B cell (primary cell): ENCODE measurements at regions of chr11 and their contacts with region 1.

Region 1: DNA sequence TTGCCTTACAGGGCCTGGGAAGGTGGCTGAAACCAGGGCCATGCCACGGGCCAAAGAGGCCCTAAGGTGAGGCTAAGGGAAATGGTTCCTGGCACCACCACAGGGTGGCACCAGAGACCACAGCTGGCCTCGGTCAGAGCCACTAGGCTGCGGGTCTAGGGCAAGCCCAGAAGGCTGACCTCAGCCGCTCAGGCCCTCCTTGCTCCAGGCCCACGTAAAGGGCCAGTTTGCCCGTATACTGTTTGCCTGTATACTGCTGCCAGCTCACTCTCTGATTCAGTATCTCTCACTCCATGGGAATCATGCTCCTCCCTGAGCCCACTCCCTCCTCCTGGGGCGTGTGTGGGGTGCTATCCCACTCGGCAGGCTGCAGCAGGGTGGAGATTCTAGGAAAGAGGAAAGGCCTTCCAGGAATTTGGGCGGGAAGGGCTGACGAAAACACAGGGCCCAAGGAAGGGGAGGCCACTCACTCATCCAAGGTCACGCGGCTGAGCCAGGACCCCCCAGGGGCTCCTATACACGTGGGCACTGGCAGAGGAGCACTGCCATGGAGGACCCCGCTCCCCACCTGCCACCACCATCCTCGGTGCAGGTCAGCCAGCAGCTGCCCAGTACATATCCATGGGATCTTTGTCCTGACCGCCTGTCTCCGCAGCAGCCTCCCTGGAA is 62.4 kb downstream of the NECTIN1 start:
- DNase-seq: peak; percentile 64
- ATAC-seq: peak; percentile 81
- H3K4me3 ChIP-seq: no peak overlapping the region
- H3K4me3 Mint-ChIP-seq: no peak overlapping the region
- H3K27ac ChIP-seq: no peak overlapping the region
- H3K27ac Mint-ChIP-seq: no peak overlapping the region
- H3K4me1 ChIP-seq: no peaks in the 10 kb centered on the region
- H3K4me1 Mint-ChIP-seq: no peaks in the 10 kb centered on the region
- H3K27me3 ChIP-seq: no peaks in the 10 kb centered on the region
- H3K27me3 Mint-ChIP-seq: no peaks in the 10 kb centered on the region
- CTCF ChIP-seq: peak; percentile 76

Region 2: DNA sequence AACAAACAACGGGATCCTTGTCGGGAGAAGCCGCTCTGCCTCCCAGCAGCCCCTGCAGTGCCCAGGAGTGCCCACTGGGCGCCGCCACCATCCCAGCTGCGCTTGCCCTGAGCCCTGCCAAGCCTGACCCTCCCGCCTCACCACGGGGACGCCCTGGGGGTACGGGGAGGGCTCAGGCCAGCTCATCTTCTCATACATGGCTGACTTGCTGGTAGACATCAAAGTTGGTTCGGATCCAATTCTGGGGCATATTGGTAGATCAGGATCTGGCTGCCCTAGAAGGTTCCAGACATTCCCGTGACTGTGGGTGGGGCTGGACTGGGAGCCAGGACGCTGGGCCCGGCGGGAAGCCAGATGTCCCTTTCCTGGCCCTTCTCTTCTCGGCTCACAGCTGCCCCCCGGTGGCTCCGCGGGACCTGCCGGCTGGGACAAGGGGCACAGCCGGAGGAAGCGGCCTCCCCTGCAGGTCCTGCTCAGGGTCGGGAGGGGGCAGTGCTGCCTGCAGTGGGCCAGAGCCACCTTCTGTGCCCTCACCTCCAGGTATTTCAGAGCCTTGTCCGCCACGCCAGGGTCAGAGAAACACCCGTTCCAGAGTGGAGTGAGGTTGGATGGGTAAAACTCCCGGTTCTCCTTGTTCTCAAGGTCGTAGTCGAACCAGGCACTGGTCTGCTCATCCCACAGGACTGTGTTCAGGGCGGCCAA is 976.6 kb before region 1 on chr11:
- CTCF ChIA-PET with region 1: no interaction called
- POLR2A ChIA-PET with region 1: no interaction called
- intact Hi-C with region 1: no loop called
- DNase-seq: peak; percentile 88
- ATAC-seq: peak; percentile 94
- H3K4me3 ChIP-seq: peak overlapping the region in 4 of 5 experiments; percentile 36 to 67 (median 52)
- H3K4me3 Mint-ChIP-seq: peak overlapping the region; percentile 85
- H3K27ac ChIP-seq: peak overlapping the region in 1 of 2 donors; percentile 51
- H3K27ac Mint-ChIP-seq: peak overlapping the region; percentile 68
- H3K4me1 ChIP-seq: peaks cover 10 to 27% of the 10 kb centered on the region in 2 donors
- H3K4me1 Mint-ChIP-seq: peaks cover 20% of the 10 kb centered on the region
- H3K27me3 ChIP-seq: peaks cover 0 to 4% (median 0%) of the 10 kb centered on the region in 4 experiments
- H3K27me3 Mint-ChIP-seq: peaks cover 10% of the 10 kb centered on the region
- CTCF ChIP-seq: peak; percentile 96

Region 3: DNA sequence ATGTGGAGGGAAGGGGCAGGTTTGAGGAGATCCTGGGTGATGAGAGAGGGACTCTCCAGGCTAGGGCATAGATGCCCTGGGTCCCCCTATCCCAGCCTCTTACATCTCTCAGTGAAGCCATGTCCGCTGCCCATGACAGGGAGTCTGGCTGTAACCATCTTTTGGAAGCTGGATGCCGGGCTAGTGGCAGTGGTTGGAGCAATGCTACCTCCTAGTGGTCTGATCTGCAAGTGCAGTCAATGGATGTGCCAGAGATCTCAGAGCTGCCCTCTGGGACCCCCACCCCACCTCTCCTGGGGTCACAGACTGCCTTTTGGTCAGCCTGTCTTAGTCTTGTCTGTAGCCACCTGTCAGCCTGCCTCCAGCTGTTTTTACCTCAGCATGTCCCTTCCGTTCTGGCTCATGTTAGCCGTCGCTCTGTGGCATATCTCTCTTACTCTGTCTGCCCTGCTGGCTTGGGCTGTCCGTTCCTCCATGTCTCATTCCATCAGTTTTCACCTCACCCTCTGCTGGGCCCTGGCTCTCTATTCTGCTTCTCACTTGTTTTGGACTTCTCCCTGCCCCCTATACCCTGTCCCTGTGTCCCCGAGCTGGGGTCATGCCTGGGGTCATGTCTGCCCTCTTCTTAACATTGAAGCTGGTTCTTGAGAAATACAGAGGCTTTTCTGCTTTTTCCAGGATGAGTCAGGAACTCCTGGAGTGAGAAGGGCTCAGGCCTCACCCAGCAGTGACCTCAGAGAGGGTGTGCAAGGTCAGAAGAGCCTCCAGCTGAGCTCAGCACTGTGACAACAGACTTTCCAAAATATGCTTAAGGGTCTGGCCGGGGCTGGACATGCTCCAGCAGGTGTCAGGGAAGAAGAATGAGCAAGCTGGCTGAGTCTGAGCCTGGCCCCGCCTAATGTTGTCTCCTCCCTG is 191.7 kb before region 1 on chr11:
- CTCF ChIA-PET with region 1: no interaction called
- POLR2A ChIA-PET with region 1: no interaction called
- intact Hi-C with region 1: no loop called
- DNase-seq: peak; percentile 59
- ATAC-seq: peak; percentile 67
- H3K4me3 ChIP-seq: no peak overlapping the region
- H3K4me3 Mint-ChIP-seq: no peak overlapping the region
- H3K27ac ChIP-seq: no peak overlapping the region
- H3K27ac Mint-ChIP-seq: no peak overlapping the region
- H3K4me1 ChIP-seq: no peaks in the 10 kb centered on the region
- H3K4me1 Mint-ChIP-seq: no peaks in the 10 kb centered on the region
- H3K27me3 ChIP-seq: peaks cover 0 to 11% (median 3%) of the 10 kb centered on the region in 4 experiments
- H3K27me3 Mint-ChIP-seq: peaks cover 45% of the 10 kb centered on the region
- CTCF ChIP-seq: peak; percentile 78

Region 4: DNA sequence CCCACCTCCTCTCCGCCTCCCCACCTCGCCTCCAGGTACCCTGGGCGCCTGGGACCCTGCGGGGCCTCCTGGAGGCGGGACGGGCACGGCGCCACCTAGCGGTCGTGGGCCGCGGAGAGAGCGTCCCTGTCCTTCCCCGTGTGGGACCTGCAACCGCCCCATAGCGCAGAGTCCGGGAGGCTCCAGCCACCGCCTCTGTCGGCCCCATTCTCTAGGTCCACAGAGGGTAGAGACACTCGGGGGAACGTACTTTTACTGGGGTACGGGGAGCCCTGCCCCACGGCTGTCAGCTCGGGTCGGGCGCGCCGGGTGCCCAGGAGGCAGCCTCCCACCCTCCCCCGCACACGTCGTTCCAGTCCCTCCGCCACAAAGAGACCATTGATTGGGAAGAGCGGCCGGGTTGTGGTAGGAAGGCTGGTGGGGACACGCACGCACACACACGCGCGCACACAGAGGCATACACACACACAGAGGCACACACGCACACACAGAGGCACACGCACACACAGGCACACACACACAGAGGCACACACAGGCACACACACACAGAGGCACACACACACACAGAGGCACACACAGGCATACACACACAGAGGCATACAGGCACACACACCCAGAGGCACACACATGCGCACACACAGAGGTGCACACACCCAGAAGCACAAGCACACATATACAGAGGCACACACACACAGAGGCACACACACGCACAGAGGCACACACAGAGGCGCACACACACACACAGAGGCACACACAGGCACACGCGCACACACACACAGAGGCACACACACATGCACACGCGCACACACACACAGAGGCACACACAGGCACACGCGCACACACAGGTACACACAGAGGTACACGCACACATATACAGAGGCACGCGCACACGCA is 75.0 kb after region 1 on chr11:
- CTCF ChIA-PET with region 1: interaction called, 3 read pairs
- POLR2A ChIA-PET with region 1: no interaction called
- intact Hi-C with region 1: loop called (anchors 1 kb)
- DNase-seq: peak; percentile 72
- ATAC-seq: peak; percentile 80
- H3K4me3 ChIP-seq: no peak overlapping the region
- H3K4me3 Mint-ChIP-seq: peak overlapping the region; percentile 24
- H3K27ac ChIP-seq: no peak overlapping the region
- H3K27ac Mint-ChIP-seq: no peak overlapping the region
- H3K4me1 ChIP-seq: peaks cover 20 to 21% of the 10 kb centered on the region in 2 donors
- H3K4me1 Mint-ChIP-seq: peaks cover 15% of the 10 kb centered on the region
- H3K27me3 ChIP-seq: peaks cover 0 to 45% (median 15%) of the 10 kb centered on the region in 4 experiments
- H3K27me3 Mint-ChIP-seq: peaks cover 61% of the 10 kb centered on the region
- CTCF ChIP-seq: peak; percentile 80

Region 5: DNA sequence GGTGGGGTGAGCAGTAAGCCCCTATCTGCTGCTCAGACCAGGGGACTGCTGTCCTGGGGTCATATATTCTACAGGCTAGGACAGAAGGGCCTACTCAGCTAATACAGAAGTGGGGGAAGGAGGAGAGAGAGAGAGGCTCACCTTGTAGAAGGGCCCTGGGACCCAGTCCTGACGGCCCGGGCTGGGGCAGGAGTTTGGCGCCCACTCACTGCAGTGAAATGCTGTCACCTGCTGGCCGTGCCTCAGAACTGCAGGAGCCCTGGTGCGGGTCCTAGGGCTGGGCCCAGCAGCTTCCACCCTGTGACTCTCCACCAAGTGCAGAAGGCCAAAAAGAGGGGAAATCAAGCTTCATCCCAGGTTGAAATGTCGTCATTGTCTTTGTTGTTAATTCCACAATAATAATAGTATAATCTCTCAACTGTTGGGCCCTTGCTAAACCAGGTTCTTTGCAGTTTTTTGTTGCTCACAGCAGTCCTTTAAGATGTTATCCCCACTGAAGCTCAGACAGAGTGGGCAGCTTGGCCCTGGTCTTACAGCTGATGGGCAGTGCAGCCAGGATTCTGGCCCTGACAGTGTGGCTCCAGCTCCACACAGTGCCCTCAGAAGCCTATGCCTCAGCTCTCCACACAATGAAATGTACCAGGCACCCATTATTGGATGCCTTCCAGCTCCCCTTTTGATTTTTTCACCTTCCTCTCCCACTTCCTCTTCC is 441.7 kb after region 1 on chr11:
- CTCF ChIA-PET with region 1: interaction called, 30 read pairs
- POLR2A ChIA-PET with region 1: no interaction called
- intact Hi-C with region 1: no loop called
- DNase-seq: peak; percentile 62
- ATAC-seq: peak; percentile 60
- H3K4me3 ChIP-seq: no peak overlapping the region
- H3K4me3 Mint-ChIP-seq: no peak overlapping the region
- H3K27ac ChIP-seq: no peak overlapping the region
- H3K27ac Mint-ChIP-seq: no peak overlapping the region
- H3K4me1 ChIP-seq: no peaks in the 10 kb centered on the region
- H3K4me1 Mint-ChIP-seq: no peaks in the 10 kb centered on the region
- H3K27me3 ChIP-seq: peaks cover 0 to 14% (median 0%) of the 10 kb centered on the region in 4 experiments
- H3K27me3 Mint-ChIP-seq: peaks cover 38% of the 10 kb centered on the region
- CTCF ChIP-seq: peak; percentile 93